MCF 10A (cell line): ENCODE measurements at regions of chr20 and their contacts with region 1.

Region 1: DNA sequence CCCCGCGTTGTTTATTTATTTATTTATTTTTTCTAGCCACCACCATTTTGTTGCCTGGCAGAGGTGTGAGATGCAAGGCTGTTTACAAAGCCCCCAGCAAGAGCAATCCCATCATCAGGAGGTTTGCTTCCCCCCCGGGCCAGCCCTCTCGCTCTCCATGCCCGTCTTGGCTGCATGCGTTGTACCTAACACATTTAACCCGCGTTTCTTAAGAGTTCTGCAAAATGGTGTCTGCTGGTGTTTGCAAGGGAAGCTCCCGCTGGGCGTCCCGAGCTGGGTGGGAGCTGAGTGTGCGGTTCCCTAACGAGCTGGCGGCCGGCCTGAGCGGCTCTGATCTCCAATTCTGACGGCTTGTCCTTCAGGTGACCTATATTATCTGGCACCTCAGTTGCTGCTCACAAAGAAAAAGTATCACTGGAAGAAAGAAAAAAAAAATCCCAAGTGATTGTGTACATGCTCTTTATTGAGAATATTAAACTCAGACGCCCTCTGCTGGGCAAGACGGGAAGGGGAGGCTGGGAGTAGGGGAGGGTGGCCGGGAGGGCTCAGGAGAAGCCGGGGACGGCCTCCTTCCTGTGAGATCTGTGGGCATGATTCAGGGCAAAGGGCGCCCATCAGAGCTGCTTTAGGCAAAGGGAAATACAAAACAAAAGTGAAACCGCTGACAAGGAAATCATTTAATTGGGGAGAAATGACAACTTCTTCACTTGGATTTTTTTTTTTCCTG is 154.8 kb downstream of the BCAS1 start:
- DNase-seq: peak; percentile 94
- H3K4me3 Mint-ChIP-seq: peak overlapping the region; percentile 76
- H3K27ac Mint-ChIP-seq: peak overlapping the region; percentile 89
- H3K4me1 Mint-ChIP-seq: peaks cover 37% of the 10 kb centered on the region
- H3K27me3 Mint-ChIP-seq: no peaks in the 10 kb centered on the region
- CTCF ChIP-seq: peak; percentile 75

Region 2: GRCh38 chr20:53594068-53595017 is 321.3 kb before region 1 on chr20:
- CTCF ChIA-PET with region 1: interaction called, 8 read pairs
- POLR2A ChIA-PET with region 1: interaction called, 65 read pairs
- intact Hi-C with region 1: no loop called
- DNase-seq: peak; percentile 90
- H3K4me3 Mint-ChIP-seq: peak overlapping the region; percentile 82
- H3K27ac Mint-ChIP-seq: peak overlapping the region; percentile 93
- H3K4me1 Mint-ChIP-seq: peaks cover 29% of the 10 kb centered on the region
- H3K27me3 Mint-ChIP-seq: no peaks in the 10 kb centered on the region
- CTCF ChIP-seq: peak; percentile 23

Region 3: DNA sequence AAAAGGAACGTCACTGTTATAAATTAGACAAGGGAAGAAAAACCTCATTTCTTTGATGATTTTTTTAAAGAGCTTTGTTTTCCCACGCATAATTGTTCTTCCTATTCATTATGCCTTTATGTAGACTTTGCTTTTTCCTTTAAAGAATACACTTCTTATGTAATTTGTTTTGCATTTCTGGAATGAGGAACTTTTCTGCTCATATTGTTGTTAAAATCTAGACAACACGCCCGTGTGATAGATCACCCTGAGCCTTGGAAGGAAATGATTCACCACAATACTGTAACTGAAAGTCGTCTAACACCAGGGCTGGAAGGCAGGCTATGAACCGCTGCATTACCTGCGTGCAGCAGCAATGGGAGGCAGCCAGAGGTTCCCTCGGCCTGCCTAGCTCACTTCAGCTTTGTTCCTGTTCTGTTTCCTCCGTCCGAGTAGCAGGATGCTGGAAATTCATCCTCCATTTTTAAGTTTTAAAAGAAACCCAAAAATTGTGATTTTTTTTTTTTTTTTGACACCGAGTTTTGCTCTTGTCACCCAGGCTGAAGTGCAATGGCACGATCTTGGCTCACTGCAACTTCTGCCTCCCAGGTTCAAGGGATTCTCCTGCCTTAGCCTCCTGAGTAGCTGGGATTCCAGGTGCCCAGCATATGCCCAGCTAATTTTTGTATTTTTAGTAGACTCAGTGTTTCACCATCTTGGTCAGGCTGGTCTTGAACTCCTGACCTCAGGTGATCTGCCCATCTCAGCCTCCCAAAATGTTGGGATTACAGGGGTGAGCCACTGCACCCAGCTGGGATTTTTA is 272.4 kb before region 1 on chr20:
- CTCF ChIA-PET with region 1: interaction called, 3 read pairs
- POLR2A ChIA-PET with region 1: interaction called, 17 read pairs
- intact Hi-C with region 1: no loop called
- DNase-seq: peak; percentile 79
- H3K4me3 Mint-ChIP-seq: peak overlapping the region; percentile 51
- H3K27ac Mint-ChIP-seq: peak overlapping the region; percentile 97
- H3K4me1 Mint-ChIP-seq: peaks cover 12% of the 10 kb centered on the region
- H3K27me3 Mint-ChIP-seq: no peaks in the 10 kb centered on the region
- CTCF ChIP-seq: no peak

Region 4: GRCh38 chr20:53750827-53751619 is 164.6 kb before region 1 on chr20:
- CTCF ChIA-PET with region 1: interaction called, 6 read pairs
- POLR2A ChIA-PET with region 1: interaction called, 14 read pairs
- intact Hi-C with region 1: loop called (anchors 1 kb)
- DNase-seq: no peak
- H3K4me3 Mint-ChIP-seq: no peak overlapping the region
- H3K27ac Mint-ChIP-seq: peak overlapping the region; percentile 83
- H3K4me1 Mint-ChIP-seq: peaks cover 29% of the 10 kb centered on the region
- H3K27me3 Mint-ChIP-seq: no peaks in the 10 kb centered on the region
- CTCF ChIP-seq: no peak

Region 5: GRCh38 chr20:53869466-53870258 is 45.9 kb before region 1 on chr20:
- CTCF ChIA-PET with region 1: interaction called, 34 read pairs
- POLR2A ChIA-PET with region 1: interaction called, 52 read pairs
- intact Hi-C with region 1: loop called (anchors 1 kb)
- DNase-seq: peak; percentile 90
- H3K4me3 Mint-ChIP-seq: peak overlapping the region; percentile 36
- H3K27ac Mint-ChIP-seq: peak overlapping the region; percentile 96
- H3K4me1 Mint-ChIP-seq: peaks cover 49% of the 10 kb centered on the region
- H3K27me3 Mint-ChIP-seq: no peaks in the 10 kb centered on the region
- CTCF ChIP-seq: peak; percentile 65

Region 6: GRCh38 chr20:53926428-53927028 is 10.9 kb after region 1 on chr20:
- CTCF ChIA-PET with region 1: interaction called, 39 read pairs
- POLR2A ChIA-PET with region 1: interaction called, 50 read pairs
- intact Hi-C with region 1: no loop called
- DNase-seq: peak; percentile 97
- H3K4me3 Mint-ChIP-seq: peak overlapping the region; percentile 8
- H3K27ac Mint-ChIP-seq: peak overlapping the region; percentile 92
- H3K4me1 Mint-ChIP-seq: peaks cover 24% of the 10 kb centered on the region
- H3K27me3 Mint-ChIP-seq: no peaks in the 10 kb centered on the region
- CTCF ChIP-seq: no peak

Region 7: DNA sequence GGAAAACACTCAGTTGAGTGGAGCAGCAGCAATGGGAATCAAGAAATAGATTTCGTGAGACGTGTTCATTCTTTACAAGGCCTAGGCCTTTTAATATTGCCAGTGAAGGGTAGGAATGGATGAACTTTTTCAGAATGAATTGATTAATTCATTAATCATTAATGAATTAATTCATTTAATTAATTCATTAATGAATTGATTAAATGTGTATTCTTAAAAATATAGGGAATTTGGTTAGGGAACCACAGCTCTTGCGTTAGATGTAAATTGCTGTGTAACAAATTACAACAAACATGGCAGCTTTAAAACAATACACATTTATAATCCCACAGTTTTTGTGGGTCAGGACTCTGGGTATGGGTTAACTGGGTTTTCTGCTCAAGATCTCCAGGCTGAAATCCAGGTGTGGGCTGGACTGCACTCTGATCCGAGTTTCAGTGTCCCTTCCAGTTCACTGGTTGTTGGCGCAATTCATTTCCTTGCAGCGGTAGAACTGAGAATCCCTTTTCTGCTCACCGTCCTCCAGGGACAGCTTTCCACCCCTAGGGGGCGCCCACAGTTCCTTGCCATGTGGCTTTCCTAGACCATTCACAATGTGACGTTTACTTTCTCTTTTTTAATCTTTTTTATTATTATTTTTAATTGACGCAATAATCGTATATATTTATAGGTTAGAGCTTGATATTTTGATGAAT is 187.6 kb after region 1 on chr20:
- CTCF ChIA-PET with region 1: interaction called, 11 read pairs
- POLR2A ChIA-PET with region 1: no interaction called
- intact Hi-C with region 1: no loop called
- DNase-seq: peak; percentile 83
- H3K4me3 Mint-ChIP-seq: no peak overlapping the region
- H3K27ac Mint-ChIP-seq: no peak overlapping the region
- H3K4me1 Mint-ChIP-seq: peaks cover 21% of the 10 kb centered on the region
- H3K27me3 Mint-ChIP-seq: no peaks in the 10 kb centered on the region
- CTCF ChIP-seq: peak; percentile 77